Naive thymus-derived CD4-positive, alpha-beta T cell (primary cell): ENCODE measurements at regions of chr21 and their contacts with region 1.

Region 1: GRCh38 chr21:36589355-36589971 is 109.5 kb upstream of the SIM2 start:
- DNase-seq: peak in 1 of 9 donors; percentile 25
- ATAC-seq: peak; percentile 41
- H3K4me3 ChIP-seq: no peak overlapping the region
- H3K4me3 Mint-ChIP-seq: no peak overlapping the region
- H3K27ac ChIP-seq: no peak overlapping the region
- H3K27ac Mint-ChIP-seq: peak overlapping the region in 1 of 9 donors; percentile 53
- H3K4me1 ChIP-seq: peaks cover 0 to 3% of the 10 kb centered on the region in 2 donors
- H3K4me1 Mint-ChIP-seq: peaks cover 0 to 17% (median 6%) of the 10 kb centered on the region in 7 donors
- H3K27me3 ChIP-seq: no peaks in the 10 kb centered on the region
- H3K27me3 Mint-ChIP-seq: peaks cover 0 to 9% (median 0%) of the 10 kb centered on the region in 5 donors

Region 2: GRCh38 chr21:36603221-36603620 is 13.8 kb after region 1 on chr21:
- CTCF ChIA-PET with region 1: interaction called, 6 read pairs
- POLR2A ChIA-PET with region 1: interaction called, 3 read pairs
- intact Hi-C with region 1: loop called in 1 of 2 experiments (anchors 1 kb)
- DNase-seq: peak in 7 of 9 donors; percentile 46 to 85 (median 76)
- ATAC-seq: peak; percentile 91
- H3K4me3 ChIP-seq: no peak overlapping the region
- H3K4me3 Mint-ChIP-seq: peak overlapping the region; percentile 25 to 90 (median 74)
- H3K27ac ChIP-seq: peak overlapping the region; percentile 57
- H3K27ac Mint-ChIP-seq: peak overlapping the region; percentile 34 to 99 (median 95)
- H3K4me1 ChIP-seq: peaks cover 0 to 20% of the 10 kb centered on the region in 2 donors
- H3K4me1 Mint-ChIP-seq: peaks cover 10 to 64% (median 50%) of the 10 kb centered on the region in 7 donors
- H3K27me3 ChIP-seq: no peaks in the 10 kb centered on the region
- H3K27me3 Mint-ChIP-seq: peaks cover 0 to 11% (median 0%) of the 10 kb centered on the region in 5 donors

Region 3: DNA sequence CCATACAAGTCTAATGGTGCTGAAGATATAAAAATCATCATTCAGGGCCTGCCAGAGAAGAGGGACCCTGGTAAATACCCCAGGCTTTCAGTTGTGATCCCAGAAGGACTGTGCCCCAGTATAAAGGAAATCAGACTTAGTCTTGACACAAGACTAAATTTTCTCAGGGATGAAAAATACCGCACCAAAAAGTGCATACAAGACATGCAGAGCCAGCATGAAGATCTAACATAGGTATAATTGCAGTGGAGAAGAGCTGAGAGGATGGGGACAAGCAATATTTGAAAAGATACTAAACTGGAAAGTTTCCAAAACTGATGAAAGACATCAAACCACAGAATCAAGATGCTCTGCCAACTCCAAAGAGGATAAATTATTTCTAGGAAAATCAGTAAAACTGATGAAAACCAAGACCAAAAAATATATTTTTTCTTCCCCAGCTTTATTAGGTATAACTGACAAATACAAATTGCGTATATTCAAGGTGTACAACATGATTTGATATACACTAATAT is 91.7 kb after region 1 on chr21:
- CTCF ChIA-PET with region 1: no interaction called
- POLR2A ChIA-PET with region 1: no interaction called
- intact Hi-C with region 1: no loop called
- DNase-seq: no peak
- ATAC-seq: no peak
- H3K4me3 ChIP-seq: no peak overlapping the region
- H3K4me3 Mint-ChIP-seq: no peak overlapping the region
- H3K27ac ChIP-seq: no peak overlapping the region
- H3K27ac Mint-ChIP-seq: no peak overlapping the region
- H3K4me1 ChIP-seq: no peaks in the 10 kb centered on the region
- H3K4me1 Mint-ChIP-seq: no peaks in the 10 kb centered on the region
- H3K27me3 ChIP-seq: no peaks in the 10 kb centered on the region
- H3K27me3 Mint-ChIP-seq: peaks cover 48 to 91% (median 88%) of the 10 kb centered on the region in 5 donors

Region 4: DNA sequence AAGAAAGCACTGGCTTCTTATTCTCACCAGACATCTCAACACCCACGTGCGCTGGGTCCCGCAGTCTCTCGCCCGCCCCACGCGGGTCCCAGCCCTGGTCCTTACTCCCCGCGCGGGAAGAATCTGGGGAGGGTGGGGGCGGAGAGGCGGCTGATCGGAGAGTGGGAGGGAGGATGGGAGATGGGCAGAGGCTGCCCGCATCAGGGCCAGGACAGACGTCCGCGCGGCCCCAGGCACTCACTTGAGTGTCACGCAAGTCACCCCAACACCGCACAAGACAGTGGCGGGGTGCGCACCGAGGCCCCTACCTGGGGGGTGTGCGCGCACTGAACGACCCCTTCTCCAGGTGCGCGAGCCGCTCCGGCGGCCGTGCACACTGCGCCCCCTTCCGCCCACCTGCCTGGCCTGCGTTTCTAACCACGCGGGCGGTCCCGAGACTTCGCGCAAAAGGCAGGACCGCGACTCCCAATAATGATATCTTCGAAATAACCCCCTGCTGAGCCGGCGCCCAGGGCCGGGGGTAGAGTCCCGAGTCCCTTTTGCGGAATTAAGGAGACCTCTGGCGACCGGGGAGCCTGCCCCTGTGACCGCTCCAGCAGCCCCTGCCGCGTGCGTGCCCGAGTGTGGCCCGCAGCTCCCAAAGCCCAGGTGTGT is 103.5 kb after region 1 on chr21:
- CTCF ChIA-PET with region 1: no interaction called
- POLR2A ChIA-PET with region 1: no interaction called
- intact Hi-C with region 1: loop called in 1 of 2 experiments (anchors 5 kb)
- DNase-seq: no peak
- ATAC-seq: no peak
- H3K4me3 ChIP-seq: no peak overlapping the region
- H3K4me3 Mint-ChIP-seq: peak overlapping the region in 4 of 10 donors; percentile 37 to 63 (median 43)
- H3K27ac ChIP-seq: no peak overlapping the region
- H3K27ac Mint-ChIP-seq: peak overlapping the region in 1 of 9 donors; percentile 33
- H3K4me1 ChIP-seq: peaks cover 0 to 7% of the 10 kb centered on the region in 2 donors
- H3K4me1 Mint-ChIP-seq: peaks cover 0 to 34% (median 24%) of the 10 kb centered on the region in 7 donors
- H3K27me3 ChIP-seq: peaks cover 0 to 45% of the 10 kb centered on the region in 2 donors
- H3K27me3 Mint-ChIP-seq: peaks cover 81 to 94% (median 84%) of the 10 kb centered on the region in 5 donors

Region 5: GRCh38 chr21:36759348-36760083 is 170.1 kb after region 1 on chr21:
- CTCF ChIA-PET with region 1: interaction called, 3 read pairs
- POLR2A ChIA-PET with region 1: no interaction called
- intact Hi-C with region 1: loop called in 1 of 2 experiments (anchors 2 kb)
- DNase-seq: no peak
- ATAC-seq: no peak
- H3K4me3 ChIP-seq: no peak overlapping the region
- H3K4me3 Mint-ChIP-seq: no peak overlapping the region
- H3K27ac ChIP-seq: no peak overlapping the region
- H3K27ac Mint-ChIP-seq: no peak overlapping the region
- H3K4me1 ChIP-seq: no peaks in the 10 kb centered on the region
- H3K4me1 Mint-ChIP-seq: peaks cover 0 to 6% (median 0%) of the 10 kb centered on the region in 7 donors
- H3K27me3 ChIP-seq: no peaks in the 10 kb centered on the region
- H3K27me3 Mint-ChIP-seq: no peaks in the 10 kb centered on the region

Region 6: GRCh38 chr21:36918291-36918690 is 328.8 kb after region 1 on chr21:
- CTCF ChIA-PET with region 1: interaction called, 12 read pairs
- POLR2A ChIA-PET with region 1: no interaction called
- intact Hi-C with region 1: no loop called
- DNase-seq: no peak
- ATAC-seq: no peak
- H3K4me3 ChIP-seq: no peak overlapping the region
- H3K4me3 Mint-ChIP-seq: no peak overlapping the region
- H3K27ac ChIP-seq: no peak overlapping the region
- H3K27ac Mint-ChIP-seq: no peak overlapping the region
- H3K4me1 ChIP-seq: no peaks in the 10 kb centered on the region
- H3K4me1 Mint-ChIP-seq: peaks cover 4 to 15% (median 10%) of the 10 kb centered on the region in 7 donors
- H3K27me3 ChIP-seq: no peaks in the 10 kb centered on the region
- H3K27me3 Mint-ChIP-seq: no peaks in the 10 kb centered on the region

Region 7: DNA sequence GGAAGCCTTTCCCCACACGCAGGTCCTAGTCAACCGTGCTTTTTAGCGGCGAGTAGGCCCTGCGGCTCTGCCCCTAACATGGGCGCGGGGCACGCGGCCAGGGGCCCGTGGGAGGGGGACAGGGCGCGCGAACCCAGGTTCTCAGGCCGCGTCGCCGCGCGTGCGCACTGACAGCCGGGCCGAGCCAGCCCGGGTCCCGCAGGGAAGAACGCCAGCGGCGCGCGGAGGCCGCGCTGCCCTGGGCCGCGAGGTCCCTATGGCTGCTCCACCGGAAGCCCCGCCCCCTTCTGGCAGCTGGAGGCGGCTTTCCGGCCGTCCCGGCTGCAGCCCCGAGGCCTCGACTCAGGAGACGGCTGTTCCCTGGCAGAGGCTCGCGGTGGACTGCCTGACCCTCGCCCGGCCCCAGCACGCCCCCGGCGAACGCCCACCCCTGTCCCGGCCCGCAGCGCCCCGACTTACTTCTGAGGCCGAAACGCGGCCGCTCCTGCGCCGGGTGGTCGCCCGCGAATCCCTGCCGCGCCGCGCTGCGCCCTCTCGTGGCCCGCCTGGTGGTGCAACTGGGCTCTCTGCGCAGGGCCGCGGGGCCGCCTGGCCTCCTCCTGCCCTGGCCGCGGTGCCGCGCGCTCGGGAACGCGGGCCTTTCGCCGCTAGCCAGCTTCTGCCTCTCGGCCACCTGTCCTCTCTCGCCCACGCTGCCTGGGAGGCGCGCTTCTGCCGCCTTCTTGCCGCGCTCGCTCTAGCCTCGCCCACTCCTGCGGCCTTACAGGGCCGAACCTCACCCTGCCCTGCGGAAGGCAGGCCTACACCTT is 400.4 kb after region 1 on chr21:
- CTCF ChIA-PET with region 1: interaction called, 7 read pairs
- POLR2A ChIA-PET with region 1: no interaction called
- intact Hi-C with region 1: loop called in 1 of 2 experiments (anchors 1 kb)
- DNase-seq: peak; percentile 63 to 95 (median 74)
- ATAC-seq: peak; percentile 90
- H3K4me3 ChIP-seq: peak overlapping the region; percentile 66
- H3K4me3 Mint-ChIP-seq: peak overlapping the region; percentile 83 to 95 (median 90)
- H3K27ac ChIP-seq: peak overlapping the region; percentile 69
- H3K27ac Mint-ChIP-seq: peak overlapping the region; percentile 71 to 94 (median 87)
- H3K4me1 ChIP-seq: peaks cover 0 to 4% of the 10 kb centered on the region in 2 donors
- H3K4me1 Mint-ChIP-seq: peaks cover 4 to 36% (median 28%) of the 10 kb centered on the region in 7 donors
- H3K27me3 ChIP-seq: no peaks in the 10 kb centered on the region
- H3K27me3 Mint-ChIP-seq: peaks cover 0 to 3% (median 0%) of the 10 kb centered on the region in 5 donors